Activated CD4-positive, alpha-beta T cell treated with anti-CD3 and anti-CD28 coated beads, Interleukin-2, amount 10 ng/mL, durations not matched to agents 7 days and 5 days (primary cell): ENCODE measurements at regions of chr19 and their contacts with region 1.

Region 1: DNA sequence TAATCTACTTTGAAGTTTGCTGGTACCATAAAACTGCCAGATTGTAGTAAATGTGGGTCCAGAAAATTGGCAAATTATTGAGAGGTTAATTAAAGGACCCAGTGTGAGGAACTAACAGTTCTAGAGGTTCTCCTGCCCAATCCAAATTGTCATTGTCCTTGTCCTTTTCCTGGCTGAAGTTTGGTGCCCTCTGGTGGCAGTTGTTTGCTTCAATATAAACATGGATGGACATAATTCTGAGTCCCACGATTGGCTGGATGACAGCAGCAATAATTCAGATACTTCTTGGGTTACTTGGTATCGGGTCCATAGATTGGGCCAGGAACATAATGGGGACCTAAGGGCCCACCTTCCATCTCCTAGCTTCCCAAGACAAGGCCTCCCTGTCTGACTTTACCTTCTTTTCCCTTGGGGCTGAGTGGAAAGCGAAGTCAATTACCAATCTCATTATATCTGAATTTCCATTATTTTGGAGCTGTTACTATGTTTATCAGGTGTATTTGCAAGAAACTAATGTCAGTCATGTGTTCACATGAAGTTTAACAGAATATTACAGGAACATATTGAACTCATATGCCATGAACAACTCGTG is 33.8 kb upstream of the GARRE1 start:
- DNase-seq: peak; percentile 74
- H3K4me3 Mint-ChIP-seq: no peak overlapping the region
- H3K27ac Mint-ChIP-seq: no peak overlapping the region
- H3K4me1 Mint-ChIP-seq: peaks cover 56% of the 10 kb centered on the region
- H3K27me3 Mint-ChIP-seq: no peaks in the 10 kb centered on the region

Region 2: DNA sequence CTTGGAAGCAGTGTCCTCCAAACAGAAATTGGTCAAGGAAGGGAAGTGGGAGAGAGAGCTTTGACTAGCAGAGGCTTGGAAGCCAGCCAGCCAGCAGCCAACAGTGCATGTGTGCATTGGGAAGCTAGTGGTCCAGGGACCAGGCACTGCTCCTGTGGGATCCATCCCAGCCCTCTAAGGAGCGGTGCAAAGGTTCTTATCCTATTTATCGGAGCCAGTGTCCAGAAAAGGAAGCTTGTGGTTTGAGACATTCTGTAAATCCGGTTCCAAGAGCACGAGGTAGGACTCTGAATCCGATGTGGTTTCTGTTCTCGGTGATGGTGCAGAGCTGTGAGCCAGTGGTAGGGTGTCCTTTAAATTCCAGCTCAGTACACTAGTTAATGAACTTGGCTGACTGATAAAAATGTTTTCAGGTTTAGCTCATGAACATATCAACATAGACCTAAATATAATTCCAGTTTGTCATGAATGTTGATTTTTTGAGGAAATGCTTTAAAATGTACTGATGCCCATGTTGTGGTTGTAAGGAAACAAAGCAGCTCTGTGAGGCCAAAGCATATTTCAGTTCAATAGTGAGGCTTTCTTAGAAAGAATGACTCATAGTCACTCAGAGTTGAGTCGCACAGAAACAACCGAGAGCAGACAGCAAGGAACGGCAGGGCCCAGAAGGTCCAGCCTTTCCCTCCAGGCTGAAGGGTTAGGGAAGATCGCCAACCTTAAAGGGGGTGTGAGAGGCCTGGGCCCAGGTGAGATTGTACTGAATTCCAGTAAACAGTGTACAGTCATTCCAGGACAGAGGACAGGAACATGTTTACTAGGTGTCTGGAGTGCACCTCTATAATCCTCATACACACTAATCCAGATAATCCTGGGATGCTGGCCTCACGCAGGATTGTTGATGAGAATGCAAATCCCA is 12.3 kb after region 1 on chr19:
- CTCF ChIA-PET with region 1: interaction called, 12 read pairs
- POLR2A ChIA-PET with region 1: no interaction called
- DNase-seq: peak; percentile 22
- H3K4me3 Mint-ChIP-seq: peak overlapping the region; percentile 32
- H3K27ac Mint-ChIP-seq: peak overlapping the region; percentile 81
- H3K4me1 Mint-ChIP-seq: peaks cover 27% of the 10 kb centered on the region
- H3K27me3 Mint-ChIP-seq: no peaks in the 10 kb centered on the region